Activated T-helper 1 cell treated with anti-CD3 and anti-CD28 coated beads, Interleukin-12 subunit alpha, Interleukin-12 subunit beta, Interleukin-2, Interleukin-4 antibody, amounts not matched to agents 30 ng/mL and 10 ng/mL and 1 ng/mL, durations not matched to agents 14 hours and 24 hours and 36 hours (primary cell): ENCODE measurements at regions of chr20 and their contacts with region 1.

Region 1: DNA sequence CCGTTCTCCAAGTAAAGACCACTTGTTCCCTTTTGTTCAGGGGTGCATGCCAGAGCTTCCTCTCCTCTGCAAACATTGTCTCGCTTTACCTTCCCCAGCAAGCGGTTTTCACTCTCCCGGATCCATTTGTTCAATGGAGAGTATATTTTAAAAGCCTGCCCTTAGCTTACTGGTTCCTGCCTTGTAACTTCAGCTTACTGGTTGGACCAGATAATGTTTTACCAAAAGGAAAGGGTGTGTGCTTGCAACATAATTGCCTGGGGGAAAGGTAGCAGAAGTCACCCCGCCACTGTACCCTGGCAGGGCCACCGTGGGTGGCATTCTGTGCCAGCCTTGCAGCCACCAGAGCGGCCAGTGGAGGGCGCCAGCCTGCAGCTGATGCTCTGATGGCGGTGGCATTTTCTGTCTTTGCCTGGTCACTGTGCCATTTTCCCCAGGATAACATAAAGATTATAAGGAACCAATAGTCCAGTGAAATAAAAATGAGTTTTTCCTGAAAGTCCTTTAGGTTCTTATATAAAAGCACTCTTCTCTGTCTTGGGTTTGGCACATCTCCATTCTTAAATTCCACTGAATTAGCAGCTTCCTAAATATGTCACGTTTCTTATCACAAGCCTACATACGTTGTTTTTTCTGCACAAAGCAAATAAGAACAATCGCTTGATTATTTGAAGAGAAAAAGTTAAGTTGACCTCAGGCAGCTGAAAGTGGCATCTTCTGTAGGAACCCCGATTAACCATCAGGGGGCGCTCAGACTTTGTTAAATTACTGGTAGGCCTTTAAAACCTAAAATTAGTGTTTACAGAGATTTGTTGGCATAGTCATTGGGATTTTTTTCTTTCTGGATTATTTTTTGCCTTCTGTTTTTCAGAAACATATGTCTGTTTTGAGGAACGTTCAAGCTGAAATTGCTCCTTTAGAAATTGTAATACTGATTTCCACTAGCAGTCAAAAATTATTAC is 67.4 kb upstream of the XRN2 start:
- DNase-seq: peak; percentile 46
- H3K4me3 Mint-ChIP-seq: no peak overlapping the region
- H3K27ac Mint-ChIP-seq: no peak overlapping the region
- H3K4me1 Mint-ChIP-seq: peaks cover 5% of the 10 kb centered on the region
- H3K27me3 Mint-ChIP-seq: no peaks in the 10 kb centered on the region

Region 2: DNA sequence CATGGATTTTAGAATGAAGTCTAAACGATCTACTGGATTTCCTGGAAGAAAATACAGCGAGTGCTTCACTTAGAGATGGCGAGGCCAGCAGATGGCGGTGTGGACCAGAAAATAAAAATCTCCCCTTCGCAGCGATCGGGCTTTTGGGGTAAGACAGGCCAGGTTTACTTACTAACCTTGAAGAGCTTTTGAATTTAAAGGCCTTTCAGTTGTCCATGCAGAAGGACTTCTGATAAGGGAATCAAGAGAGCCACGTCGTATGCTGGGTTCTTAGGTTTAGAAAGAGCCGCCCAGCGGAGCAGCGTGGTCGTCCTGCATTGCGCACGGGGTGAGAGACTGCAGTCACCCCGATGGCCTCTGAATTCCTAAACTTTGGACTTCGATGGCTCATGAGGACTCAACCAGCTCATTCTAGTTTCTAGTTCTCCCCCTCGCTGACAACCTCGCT is 398.2 kb before region 1 on chr20:
- intact Hi-C with region 1: loop called (anchors 5 kb)
- DNase-seq: peak; percentile 3
- H3K4me3 Mint-ChIP-seq: no peak overlapping the region
- H3K27ac Mint-ChIP-seq: no peak overlapping the region
- H3K4me1 Mint-ChIP-seq: peaks cover 5% of the 10 kb centered on the region
- H3K27me3 Mint-ChIP-seq: peaks cover 8% of the 10 kb centered on the region

Region 3: GRCh38 chr20:21048841-21049273 is 186.9 kb before region 1 on chr20:
- intact Hi-C with region 1: no loop called
- DNase-seq: peak; percentile 4
- H3K4me3 Mint-ChIP-seq: no peak overlapping the region
- H3K27ac Mint-ChIP-seq: no peak overlapping the region
- H3K4me1 Mint-ChIP-seq: no peaks in the 10 kb centered on the region
- H3K27me3 Mint-ChIP-seq: peaks cover 10% of the 10 kb centered on the region

Region 4: GRCh38 chr20:21105429-21106170 is 130.2 kb before region 1 on chr20:
- intact Hi-C with region 1: loop called (anchors 5 kb)
- DNase-seq: no peak
- H3K4me3 Mint-ChIP-seq: no peak overlapping the region
- H3K27ac Mint-ChIP-seq: no peak overlapping the region
- H3K4me1 Mint-ChIP-seq: peaks cover 18% of the 10 kb centered on the region
- H3K27me3 Mint-ChIP-seq: peaks cover 64% of the 10 kb centered on the region

Region 5: DNA sequence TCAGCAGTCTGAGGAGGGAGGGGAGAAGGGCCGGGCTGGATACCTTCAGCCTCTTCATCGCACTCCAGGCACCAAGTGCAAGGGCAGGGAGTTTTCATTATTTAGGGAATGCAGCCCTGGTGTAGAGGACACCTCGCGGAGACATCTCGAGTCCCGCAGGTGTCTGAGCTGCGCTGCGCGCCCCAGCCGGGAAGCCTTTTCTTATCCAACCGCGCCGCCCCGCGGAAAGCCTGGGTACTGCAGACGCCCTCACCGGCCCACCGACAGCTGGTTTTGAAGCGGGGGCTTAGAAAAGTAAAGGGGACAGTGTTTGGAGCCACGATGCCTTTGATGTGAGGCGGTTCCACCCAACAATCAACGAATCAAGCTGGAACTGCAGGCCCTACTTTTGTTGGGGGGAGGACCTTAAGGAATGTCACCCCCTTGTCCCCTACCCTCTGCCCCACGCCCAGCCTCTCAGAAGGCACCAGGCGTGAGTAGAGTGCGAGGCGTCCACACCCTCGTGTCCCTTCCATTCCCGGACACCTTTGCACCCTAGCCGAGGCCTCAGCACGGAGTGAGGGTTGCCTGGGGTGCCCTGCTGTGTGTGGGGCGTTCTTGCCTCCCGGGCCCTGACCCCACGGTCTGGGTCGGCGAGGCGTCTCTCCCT is 269.5 kb after region 1 on chr20:
- intact Hi-C with region 1: loop called (anchors 1 kb)
- DNase-seq: peak; percentile 60
- H3K4me3 Mint-ChIP-seq: peak overlapping the region; percentile 57
- H3K27ac Mint-ChIP-seq: peak overlapping the region; percentile 63
- H3K4me1 Mint-ChIP-seq: peaks cover 25% of the 10 kb centered on the region
- H3K27me3 Mint-ChIP-seq: peaks cover 51% of the 10 kb centered on the region

Region 6: DNA sequence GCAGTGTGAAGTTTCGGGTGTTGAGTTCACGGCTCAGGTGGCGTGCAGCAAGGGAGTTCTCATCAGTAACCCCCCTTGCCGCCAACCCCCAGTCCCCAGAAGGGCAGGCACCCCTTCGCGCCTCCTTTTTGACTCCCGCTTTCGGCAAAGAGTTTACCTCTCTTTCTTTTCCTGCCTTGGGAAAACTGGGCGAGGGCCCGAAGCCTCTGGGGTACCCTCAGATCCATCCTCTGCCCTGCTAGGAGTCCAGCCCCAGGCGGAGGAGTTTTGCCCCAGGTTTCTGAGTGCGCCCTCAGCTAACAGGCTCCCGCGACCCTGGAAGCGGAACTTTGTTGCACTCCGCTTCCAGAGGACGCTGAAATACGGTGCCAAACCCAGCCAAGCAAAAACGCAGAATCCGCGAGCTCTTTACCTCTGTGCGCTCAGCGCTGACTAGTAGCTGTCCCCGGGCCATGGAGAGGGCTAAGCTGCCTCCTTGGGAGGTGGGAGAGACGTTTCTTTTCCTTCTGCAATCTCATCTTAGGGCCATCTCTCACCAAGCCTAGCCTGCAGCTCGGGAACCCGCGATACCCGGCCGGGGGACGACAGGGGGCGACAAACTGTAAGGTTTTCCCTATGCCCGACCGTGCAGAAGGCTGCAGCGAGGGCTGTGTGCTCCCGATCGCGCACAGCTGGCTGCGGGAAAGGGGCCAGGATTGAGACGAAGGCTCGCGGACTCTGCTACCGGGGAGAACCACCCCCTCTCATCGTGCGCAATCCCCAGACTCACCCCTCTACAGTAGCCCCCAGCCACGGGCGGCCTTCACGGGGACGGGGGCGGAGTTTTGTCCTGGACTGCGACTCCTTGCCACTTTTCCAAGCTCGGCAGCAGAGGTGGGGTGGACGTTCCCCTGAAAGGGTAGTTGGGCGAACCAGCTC is 467.0 kb after region 1 on chr20:
- intact Hi-C with region 1: loop called (anchors 10 kb)
- DNase-seq: no peak
- H3K4me3 Mint-ChIP-seq: no peak overlapping the region
- H3K27ac Mint-ChIP-seq: no peak overlapping the region
- H3K4me1 Mint-ChIP-seq: peaks cover 8% of the 10 kb centered on the region
- H3K27me3 Mint-ChIP-seq: peaks cover 81% of the 10 kb centered on the region